Right ventricle myocardium inferior (tissue), 1 donor: ENCODE measurements at regions of chr4 and their contacts with region 1.

Region 1: DNA sequence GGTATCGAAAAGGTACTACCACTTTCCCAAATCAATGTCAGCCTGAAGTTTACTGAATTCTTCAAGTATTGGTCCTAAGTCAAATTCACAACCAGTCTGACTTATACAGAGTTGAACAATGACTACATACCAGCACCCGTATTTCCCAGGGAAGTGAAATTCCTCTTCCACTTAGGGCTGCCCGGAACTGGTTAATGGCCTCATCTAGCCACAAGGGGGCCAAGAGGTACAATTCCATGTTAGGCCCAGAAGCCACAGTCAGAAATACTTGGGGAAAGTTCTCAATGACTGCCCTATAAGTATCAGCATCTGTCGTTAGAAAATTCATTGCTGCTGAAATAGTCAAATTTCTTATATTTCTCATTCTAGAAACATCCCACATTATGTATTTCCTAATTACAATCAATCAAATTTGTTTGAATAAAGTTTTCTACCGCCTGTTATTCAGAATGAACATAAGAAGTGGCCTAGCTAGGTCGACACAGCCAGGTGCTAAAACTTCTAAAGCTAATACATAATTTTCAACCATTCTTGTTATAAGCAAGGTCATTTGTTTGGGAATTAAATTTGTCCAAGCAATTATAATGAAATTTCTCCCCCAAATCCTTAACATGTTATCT is 5.7 kb upstream of the PCDH7 start:
- DNase-seq: no peak
- ATAC-seq: no peak

Region 2: DNA sequence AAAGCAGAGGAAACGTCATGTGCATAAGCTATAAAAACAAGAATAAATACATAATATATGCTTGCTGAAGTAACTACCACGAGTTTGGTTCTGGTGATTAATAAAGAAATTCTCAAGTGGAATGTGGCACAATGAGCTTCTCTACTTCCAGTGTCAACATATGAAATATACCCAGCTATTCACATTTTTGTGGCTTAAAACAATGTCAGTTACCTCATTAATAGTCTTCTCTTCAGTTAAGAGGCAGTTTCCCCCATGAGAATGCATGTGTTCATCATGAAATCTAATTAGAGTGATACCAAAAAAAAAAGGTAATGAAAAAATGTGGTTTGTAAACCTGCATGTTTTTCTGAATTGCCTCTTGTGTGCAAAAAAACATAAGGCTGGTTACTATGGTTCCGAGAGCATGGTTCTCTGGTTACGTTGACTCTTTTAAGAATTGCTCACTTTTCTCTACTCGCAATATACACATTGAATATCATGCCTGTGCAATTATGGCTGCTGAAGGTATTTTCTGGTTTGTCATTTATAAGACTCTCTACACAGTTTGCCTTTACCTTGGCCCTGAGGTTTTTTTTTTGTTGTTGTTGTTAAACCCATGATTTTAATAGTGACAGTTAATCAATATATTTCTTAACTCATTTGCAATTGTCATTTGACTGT is 113.9 kb after region 1 on chr4:
- intact Hi-C with region 1: no loop called
- DNase-seq: no peak
- ATAC-seq: no peak

Region 3: DNA sequence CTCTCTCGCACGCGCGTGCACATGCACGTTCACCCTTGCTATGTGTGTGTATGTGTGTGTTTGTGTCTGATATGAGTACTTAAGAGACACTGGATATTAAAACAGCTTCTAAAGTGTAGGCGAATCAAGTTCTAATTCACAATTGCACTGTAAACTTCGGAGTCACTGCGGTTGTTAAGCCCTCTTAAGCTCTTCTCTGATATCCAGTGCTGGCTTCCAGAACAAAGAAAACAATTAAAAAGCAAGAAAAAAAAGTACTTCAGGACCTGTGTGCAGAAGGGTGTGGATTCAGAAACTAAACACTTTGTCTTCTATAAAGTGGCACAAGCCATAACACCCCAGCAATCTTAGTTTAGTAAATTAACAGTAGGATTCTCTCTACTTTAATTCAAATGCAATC is 305.8 kb after region 1 on chr4:
- intact Hi-C with region 1: loop called (anchors 5 kb)
- DNase-seq: no peak
- ATAC-seq: no peak

Region 4: DNA sequence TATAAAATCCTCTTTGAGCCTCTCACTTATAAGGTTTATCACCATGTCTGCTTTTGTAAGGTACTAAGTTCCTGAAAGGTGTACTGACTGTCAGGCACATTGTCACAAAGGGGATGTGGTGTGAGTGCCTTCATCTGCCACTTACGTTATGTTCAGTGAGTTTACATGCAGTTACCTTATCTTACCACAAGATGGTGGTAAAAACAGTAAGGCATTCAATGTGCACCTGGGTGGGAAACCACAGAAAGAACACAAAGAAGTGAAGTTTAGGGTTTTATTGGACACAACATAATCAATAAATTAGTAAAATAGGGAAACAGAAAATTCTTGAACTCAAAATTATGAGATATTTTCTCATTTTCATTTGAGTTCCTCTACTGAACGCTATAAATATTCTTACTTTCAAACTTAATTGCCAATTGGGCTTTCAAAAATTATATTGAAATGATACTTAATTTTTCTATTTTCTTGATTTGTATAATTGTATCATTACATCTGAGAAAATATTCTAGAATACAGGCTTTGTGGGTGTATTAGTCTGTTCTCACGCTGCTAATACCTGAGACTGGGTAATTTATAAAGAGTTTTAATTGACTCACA is 656.4 kb after region 1 on chr4:
- intact Hi-C with region 1: loop called (anchors 10 kb)
- DNase-seq: no peak
- ATAC-seq: no peak

Region 5: GRCh38 chr4:31674313-31674947 is 959.9 kb after region 1 on chr4:
- intact Hi-C with region 1: loop called (anchors 5 kb)
- DNase-seq: no peak
- ATAC-seq: no peak